ENCODE measurements at regions of chr16 and their contacts with region 1.

Region 1: DNA sequence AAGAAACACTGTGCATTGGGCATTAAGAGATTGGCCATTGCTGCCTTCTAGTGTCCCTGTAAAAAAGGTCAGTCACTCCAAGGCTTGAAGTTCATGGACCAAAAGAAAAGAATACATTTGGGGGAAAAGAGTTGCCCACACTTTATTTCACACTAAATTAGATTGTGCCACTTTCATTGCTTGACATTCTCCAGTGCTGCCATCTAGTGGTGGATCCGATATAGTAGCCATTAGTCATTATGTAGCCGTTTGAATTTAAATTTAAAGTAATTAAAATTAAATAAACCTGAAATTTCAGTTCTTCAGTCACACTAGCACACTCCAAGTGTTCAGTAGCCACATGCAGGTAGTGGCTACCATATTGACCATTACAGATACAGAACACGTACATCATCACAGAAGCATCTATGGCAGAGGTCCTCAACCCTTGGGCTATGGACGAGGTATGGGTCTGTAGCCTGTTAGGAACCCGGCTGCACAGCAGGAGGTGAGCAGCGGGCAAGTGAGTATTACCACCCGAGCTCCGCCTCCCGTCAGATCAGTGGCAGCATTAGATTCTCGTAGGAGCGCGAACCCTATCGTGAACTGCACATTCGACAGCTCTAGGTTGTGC is 21.9 kb upstream of the CDH5 start:
- DNase-seq: no peak

Region 2: GRCh38 chr16:66326991-66327513 is 17.6 kb before region 1 on chr16:
- CTCF ChIA-PET with region 1: interaction called, 24 read pairs
- POLR2A ChIA-PET with region 1: no interaction called
- DNase-seq: no peak

Region 3: GRCh38 chr16:66357153-66357928 is 12.7 kb after region 1 on chr16:
- CTCF ChIA-PET with region 1: interaction called, 25 read pairs
- POLR2A ChIA-PET with region 1: no interaction called
- DNase-seq: peak; percentile 73

Measured in HEK293T (cell line).